ENCODE measurements at regions of chr1 and their contacts with region 1.

Region 1: GRCh38 chr1:42173155-42173933 is 8.8 kb upstream of the GUCA2A start:
- DNase-seq: no peak
- H3K4me3 ChIP-seq: no peak overlapping the region
- H3K27me3 ChIP-seq: no peaks in the 10 kb centered on the region
- CTCF ChIP-seq: peak; percentile 97

Region 2: DNA sequence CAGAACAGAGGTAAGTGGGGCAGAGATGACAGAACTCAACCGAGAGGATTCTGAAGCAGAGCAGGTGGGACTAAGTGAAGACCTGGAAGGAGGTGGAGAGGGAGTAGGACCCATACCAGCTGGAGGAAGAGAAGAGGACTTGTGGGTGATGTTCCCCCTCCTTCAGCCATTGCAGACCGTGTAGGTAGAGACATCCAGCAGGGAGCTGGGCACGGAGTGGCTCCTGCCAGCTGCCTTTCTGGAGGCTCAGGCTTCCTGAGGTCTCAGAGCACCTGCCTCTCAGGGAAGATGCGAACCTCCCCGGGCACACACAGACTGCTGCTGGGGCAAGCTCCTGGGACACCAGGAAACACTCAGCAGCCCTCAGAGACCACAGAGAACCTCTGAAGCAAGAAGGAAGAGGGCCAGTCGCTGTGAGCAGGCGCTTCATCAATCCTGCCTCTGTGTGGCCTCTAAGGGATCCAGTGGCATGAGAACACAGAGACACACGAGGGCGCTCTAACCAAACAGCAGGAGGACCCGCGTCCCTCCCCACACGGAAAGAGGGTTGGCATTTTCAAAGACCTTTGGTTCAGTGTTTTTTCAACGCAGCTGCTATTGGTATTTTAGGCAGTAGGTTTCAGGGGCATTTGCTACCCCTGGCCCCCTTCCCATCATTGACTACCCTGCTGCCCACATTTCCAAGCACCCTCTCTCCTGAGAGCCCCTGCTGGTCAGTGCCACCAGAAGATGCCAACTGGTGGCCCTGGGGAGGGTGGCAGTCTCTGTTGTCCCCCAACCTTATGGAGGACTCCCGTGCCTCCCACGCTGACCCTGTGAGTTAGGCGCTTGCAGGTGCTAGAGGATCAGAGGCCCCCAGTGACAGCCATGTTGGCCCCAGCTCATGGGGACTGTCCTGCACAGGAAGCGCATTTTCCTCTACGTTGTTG is 599.3 kb before region 1 on chr1:
- CTCF ChIA-PET with region 1: interaction called, 22 read pairs
- POLR2A ChIA-PET with region 1: no interaction called
- DNase-seq: peak; percentile 8
- H3K4me3 ChIP-seq: no peak overlapping the region
- H3K27me3 ChIP-seq: no peaks in the 10 kb centered on the region
- CTCF ChIP-seq: peak; percentile 96

Region 3: DNA sequence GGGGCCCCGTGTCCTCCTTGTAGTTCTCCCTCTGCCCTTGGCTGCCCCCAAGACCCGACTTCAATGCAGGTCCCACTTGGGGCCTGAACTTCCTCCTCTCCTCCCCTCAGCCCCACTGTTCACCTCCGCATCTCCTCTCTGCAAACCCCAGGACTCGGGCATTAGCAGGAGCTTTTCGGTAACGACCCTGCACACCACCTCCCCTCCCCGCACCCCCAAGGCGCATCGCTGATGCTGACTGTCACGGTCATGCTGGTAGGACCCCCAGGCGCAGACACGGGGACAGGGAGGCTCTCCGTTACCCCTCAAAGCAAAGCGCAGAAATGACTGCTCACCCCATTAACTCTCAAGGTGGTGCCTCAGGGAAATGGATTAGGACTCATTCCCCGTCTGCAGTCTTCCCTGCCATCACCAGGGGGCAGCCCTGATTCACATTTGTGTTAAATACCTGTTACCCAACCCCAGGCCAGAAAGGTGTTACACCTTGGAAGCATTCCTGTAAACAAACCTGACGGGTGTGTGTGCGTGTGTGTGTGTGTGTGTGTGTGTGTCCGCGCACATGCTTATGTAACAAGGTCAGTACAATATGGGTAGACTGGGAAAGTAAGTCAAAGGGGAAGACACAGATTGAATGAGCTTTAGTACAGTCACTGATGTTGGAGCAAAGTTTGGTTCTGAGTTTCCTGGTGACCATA is 26.6 kb before region 1 on chr1:
- CTCF ChIA-PET with region 1: interaction called, 13 read pairs
- POLR2A ChIA-PET with region 1: no interaction called
- DNase-seq: no peak
- H3K4me3 ChIP-seq: no peak overlapping the region
- H3K27me3 ChIP-seq: peaks cover 38% of the 10 kb centered on the region
- CTCF ChIP-seq: peak; percentile 89

Region 4: GRCh38 chr1:42186152-42186551 is 12.8 kb after region 1 on chr1:
- CTCF ChIA-PET with region 1: interaction called, 17 read pairs
- POLR2A ChIA-PET with region 1: no interaction called
- DNase-seq: no peak
- H3K4me3 ChIP-seq: no peak overlapping the region
- H3K27me3 ChIP-seq: no peaks in the 10 kb centered on the region
- CTCF ChIP-seq: no peak

Region 5: GRCh38 chr1:42250164-42250563 is 76.8 kb after region 1 on chr1:
- CTCF ChIA-PET with region 1: no interaction called
- POLR2A ChIA-PET with region 1: no interaction called
- DNase-seq: no peak
- H3K4me3 ChIP-seq: no peak overlapping the region
- H3K27me3 ChIP-seq: no peaks in the 10 kb centered on the region
- CTCF ChIP-seq: no peak

Region 6: GRCh38 chr1:42335050-42335808 is 161.9 kb after region 1 on chr1 and contains the start of gene FOXJ3:
- CTCF ChIA-PET with region 1: interaction called, 16 read pairs
- POLR2A ChIA-PET with region 1: no interaction called
- DNase-seq: peak; percentile 46
- H3K4me3 ChIP-seq: peak within 1 kb of the TSS; percentile 84
- H3K27me3 ChIP-seq: no peaks in the 10 kb centered on the region
- CTCF ChIP-seq: no peak
- polyA plus RNA-seq, gene FOXJ3: 22.9 and 27.0 TPM in 2 replicates

Region 7: DNA sequence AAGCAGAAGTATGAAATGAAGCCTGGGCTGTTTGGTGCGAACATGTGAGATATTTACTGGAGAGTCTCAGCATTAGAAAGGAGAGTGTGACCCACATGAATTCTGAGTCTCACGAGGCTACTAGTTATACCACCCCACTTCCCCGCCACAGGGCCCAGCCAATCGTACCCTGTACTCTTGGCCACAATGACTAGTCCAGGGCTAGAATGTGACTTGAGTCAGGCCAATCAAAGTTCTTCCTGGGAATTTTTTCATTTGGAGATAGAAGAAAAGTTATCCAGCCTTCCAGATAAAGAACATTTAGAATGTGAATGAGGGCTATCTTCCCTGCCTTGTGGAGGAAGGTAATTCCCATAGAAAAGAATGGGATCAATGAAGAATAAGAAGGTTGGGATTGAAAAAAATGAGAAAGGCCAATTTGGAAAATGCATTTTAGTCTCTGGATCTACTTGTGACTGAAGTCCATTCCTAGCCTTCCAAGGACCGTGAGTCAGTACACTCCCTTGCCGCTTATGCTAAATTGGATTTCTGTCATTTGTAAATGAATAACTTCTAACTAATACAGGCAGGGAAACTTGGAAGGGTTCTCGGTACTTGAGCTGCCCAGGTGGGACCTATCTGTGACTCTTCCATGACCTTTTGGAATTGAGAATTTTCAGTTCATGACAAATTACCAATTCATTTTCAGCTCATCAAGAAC is 194.9 kb after region 1 on chr1:
- CTCF ChIA-PET with region 1: no interaction called
- POLR2A ChIA-PET with region 1: no interaction called
- DNase-seq: no peak
- H3K4me3 ChIP-seq: no peak overlapping the region
- H3K27me3 ChIP-seq: 0 out of 2 replicates have a peak, but pooled peaks cover 2% of the 10 kb centered on the region
- CTCF ChIP-seq: no peak

Measured in BJ (cell line).